ENCODE measurements at regions of chr9 and their contacts with region 1.

Region 1: GRCh38 chr9:78121488-78121887 is 89.9 kb upstream of the GNAQ start:
- DNase-seq: peak; percentile 72
- ATAC-seq: peak; percentile 58; the same call in 1 of the 2 replicates
- H3K4me3 ChIP-seq: no peak overlapping the region
- H3K27ac ChIP-seq: no peak overlapping the region
- H3K4me1 ChIP-seq: peaks cover 16% of the 10 kb centered on the region
- H3K27me3 ChIP-seq: no peaks in the 10 kb centered on the region
- CTCF ChIP-seq: peak; percentile 63

Region 2: DNA sequence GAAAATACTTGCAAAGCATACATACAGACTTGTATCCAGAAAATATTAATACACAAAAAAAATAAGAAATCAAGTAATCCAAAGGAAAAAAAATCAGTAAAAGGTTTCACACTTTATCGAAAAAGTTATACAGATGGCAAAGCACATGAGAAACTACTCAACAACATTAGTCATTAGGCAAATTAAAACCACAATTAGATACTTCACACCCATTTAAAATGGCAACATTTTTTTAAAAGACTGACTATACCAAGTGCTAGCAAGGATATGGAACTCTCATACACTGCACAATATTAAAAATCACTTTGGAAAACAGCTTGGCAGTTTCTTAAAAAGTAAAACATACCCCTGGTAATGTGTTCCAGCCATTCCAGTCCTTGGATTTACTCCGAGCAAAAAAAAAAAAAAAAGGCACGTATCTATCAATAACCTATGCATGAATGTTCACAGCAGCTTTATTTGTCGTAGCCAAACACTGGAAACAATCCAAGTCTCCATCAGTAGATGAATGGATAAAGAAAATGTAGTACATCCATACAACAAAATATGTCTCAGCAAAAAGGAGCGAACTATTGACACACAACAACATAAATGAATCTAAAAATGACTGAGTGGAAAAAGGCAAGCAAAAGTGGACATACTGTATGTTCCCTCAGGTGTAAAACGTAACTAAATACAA is 155.9 kb before region 1 on chr9:
- CTCF ChIA-PET with region 1: no interaction called
- POLR2A ChIA-PET with region 1: no interaction called
- intact Hi-C with region 1: no loop called
- DNase-seq: no peak
- ATAC-seq: no peak
- H3K4me3 ChIP-seq: no peak overlapping the region
- H3K27ac ChIP-seq: no peak overlapping the region
- H3K4me1 ChIP-seq: no peaks in the 10 kb centered on the region
- H3K27me3 ChIP-seq: no peaks in the 10 kb centered on the region
- CTCF ChIP-seq: no peak

Region 3: GRCh38 chr9:78035383-78035993 is 86.0 kb before region 1 on chr9:
- CTCF ChIA-PET with region 1: interaction called, 3 read pairs
- POLR2A ChIA-PET with region 1: no interaction called
- intact Hi-C with region 1: loop called (anchors 2 kb)
- DNase-seq: peak; percentile 74
- ATAC-seq: peak; percentile 7; the same call in 1 of the 2 replicates
- H3K4me3 ChIP-seq: peak overlapping the region; percentile 35; the same call in 1 of the 2 replicates
- H3K27ac ChIP-seq: no peak overlapping the region
- H3K4me1 ChIP-seq: peaks cover 9% of the 10 kb centered on the region; the same call in 1 of the 2 replicates
- H3K27me3 ChIP-seq: no peaks in the 10 kb centered on the region
- CTCF ChIP-seq: peak; percentile 78

Region 4: DNA sequence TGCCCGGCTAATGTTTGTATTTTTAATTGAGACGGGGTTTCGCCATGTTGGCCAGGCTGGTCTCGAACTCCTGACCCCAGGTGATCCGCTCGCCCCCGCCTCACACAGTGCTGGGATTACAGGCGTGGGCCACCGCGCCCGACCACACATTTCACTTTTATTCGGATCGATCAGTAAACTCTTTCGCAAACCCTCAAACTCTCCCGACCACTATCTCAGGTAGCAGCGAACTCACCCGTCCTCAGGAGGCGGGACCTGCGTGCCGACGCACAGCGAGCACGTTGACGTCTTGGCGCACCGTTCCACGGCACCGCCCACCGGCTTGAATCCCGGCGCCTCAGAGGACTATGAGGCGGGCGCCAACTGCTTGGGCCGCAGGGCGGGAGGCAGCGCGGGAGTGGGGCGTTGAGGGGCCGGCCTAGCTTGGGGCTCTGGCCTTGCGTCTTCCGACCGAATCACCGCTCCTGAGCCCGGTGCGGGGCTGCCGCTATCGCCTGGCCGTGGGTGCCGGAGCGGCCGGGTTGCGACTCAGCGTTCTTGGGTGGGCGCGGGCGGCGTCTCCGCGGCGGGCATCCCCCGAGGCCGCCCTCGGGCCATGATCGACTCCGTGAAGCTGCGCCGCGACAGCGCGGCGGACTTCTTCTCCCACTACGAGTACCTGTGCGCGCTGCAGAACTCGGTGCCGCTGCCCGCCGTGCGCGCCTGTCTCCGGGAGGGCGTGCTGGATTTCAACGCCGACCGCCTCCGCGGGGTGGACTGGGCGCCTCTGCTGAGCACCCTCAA is 114.5 kb after region 1 on chr9 and contains the start of gene CEP78:
- CTCF ChIA-PET with region 1: no interaction called
- POLR2A ChIA-PET with region 1: no interaction called
- intact Hi-C with region 1: loop called (anchors 10 kb)
- DNase-seq: peak; percentile 90
- ATAC-seq: peak; percentile 93
- H3K4me3 ChIP-seq: peak within 1 kb of the TSS; percentile 98
- H3K27ac ChIP-seq: 0 out of 2 replicates have a peak within 1 kb of the TSS, but pooled peaks have one; percentile 23
- H3K4me1 ChIP-seq: peaks cover 4% of the 10 kb centered on the region; the same call in 1 of the 2 replicates
- H3K27me3 ChIP-seq: no peaks in the 10 kb centered on the region
- CTCF ChIP-seq: no peak
- total RNA-seq, gene CEP78: 35.2 and 52.5 TPM in 2 replicates